AG04449 (cell line): ENCODE measurements at regions of chr9 and their contacts with region 1.

Region 1: DNA sequence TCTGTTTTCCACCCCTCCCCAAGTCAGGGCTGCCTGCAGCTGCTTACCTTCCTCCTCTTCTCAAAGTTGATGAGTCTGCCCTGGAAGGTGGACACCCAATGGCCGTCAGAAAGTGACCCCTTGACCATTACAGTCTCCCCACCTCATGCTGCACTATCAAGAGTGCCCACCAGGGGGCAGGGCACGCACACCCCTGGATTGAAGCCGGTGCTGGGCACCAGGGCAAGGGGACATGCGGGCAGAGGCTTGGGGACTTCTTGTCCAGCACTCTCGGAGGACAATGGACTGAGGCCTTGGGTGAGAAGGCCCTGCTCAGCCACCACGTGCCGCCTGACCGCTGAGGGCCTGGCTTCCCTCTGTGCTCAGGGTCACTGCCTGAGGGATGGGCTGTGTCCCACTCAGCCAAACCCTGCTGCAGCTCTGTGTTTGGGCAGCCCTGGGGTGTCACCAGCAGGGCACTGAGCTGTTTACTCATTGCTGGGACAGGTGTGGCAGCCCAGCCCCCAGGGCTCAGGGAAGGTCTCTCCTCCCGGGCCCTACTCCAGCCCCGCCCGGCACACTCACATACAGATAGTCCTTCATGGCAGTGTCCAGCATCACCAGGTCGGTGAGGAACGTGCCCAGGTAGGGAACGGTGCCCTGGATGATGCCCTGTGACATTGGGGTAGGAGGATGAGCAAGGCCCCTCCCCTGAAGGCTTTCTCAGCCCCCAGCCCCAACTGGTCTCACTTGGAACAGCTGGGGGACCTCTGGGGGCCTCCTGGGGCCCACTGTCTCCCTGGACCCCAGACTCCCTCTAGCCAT is 17.7 kb downstream of the RALGDS start:
- DNase-seq: no peak
- H3K4me3 ChIP-seq: no peak overlapping the region
- CTCF ChIP-seq: peak; percentile 90

Region 2: DNA sequence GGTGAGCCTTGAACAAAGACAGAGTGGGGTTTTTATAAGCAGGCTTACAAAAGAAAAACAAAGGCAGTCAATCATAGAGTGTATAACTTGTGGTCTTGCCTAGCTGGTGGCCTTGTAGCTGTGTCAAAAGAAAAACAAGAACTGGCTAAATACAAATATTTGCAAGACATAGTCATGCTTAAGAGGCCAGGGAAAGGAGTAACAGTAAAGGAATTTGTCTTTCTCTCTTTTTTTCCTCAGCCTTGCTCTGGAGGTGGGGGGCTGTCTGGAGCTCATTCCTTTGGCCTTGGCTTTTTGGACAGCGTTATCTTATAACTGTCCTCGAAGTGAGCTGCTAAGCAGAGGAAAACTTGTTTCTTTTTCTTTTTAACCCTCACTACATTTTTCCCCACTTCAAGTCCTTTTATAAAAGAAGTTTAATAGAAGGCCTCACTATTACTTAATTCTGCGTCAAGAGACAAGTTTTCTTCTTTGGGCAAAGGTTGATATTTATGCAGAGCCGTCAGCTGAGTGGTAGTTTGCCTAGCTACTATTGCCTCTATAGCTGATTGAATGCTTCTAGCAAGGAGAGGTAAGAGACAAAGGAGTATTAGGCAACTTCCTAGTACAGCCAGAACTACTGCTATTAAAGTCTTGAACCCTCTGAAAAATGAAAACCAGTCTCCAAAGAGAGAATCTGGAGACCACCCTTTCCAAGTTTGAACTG is 27.3 kb before region 1 on chr9:
- CTCF ChIA-PET with region 1: interaction called, 17 read pairs
- POLR2A ChIA-PET with region 1: no interaction called
- DNase-seq: peak; percentile 80
- H3K4me3 ChIP-seq: no peak overlapping the region; the same call in 1 of the 2 replicates
- CTCF ChIP-seq: no peak

Region 3: GRCh38 chr9:133089271-133089671 is 14.1 kb before region 1 on chr9:
- CTCF ChIA-PET with region 1: interaction called, 16 read pairs
- POLR2A ChIA-PET with region 1: no interaction called
- DNase-seq: no peak
- H3K4me3 ChIP-seq: no peak overlapping the region
- CTCF ChIP-seq: no peak

Region 4: GRCh38 chr9:133115448-133116345 is 12.3 kb after region 1 on chr9:
- CTCF ChIA-PET with region 1: interaction called, 139 read pairs
- POLR2A ChIA-PET with region 1: no interaction called
- DNase-seq: no peak
- H3K4me3 ChIP-seq: no peak overlapping the region
- CTCF ChIP-seq: no peak

Region 5: DNA sequence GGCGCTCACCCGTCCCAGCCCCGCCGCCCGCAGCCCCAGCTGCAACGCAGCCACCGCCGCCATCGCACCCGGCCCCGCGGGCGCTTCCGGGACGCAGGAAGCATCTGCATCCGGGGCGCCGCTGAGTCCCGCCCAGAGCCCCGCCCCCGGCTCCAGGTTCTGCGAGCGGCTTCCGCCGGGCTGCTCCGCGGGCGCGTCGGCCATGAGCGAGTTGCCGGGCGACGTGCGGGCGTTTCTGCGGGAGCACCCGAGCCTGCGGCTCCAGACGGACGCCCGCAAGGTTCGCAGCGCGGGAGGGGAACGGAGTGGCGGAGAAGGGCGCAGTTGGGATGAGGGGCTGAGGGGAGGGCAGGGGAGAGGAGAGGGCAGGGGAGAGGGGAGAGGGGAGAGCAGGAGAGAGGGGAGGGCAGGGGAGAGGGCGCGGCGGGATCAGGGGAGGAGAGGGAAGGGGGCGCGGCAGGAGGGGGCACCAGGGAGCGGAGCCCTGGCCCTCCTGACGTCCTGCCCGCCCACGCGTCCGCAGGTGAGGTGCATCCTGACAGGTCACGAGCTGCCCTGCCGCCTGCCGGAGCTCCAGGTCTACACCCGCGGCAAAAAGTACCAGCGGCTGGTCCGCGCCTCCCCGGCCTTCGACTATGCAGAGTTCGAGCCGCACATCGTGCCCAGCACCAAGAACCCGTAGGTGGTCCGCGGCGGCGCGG is 253.2 kb after region 1 on chr9 and contains the starts of genes SURF1 and SURF2:
- CTCF ChIA-PET with region 1: no interaction called
- POLR2A ChIA-PET with region 1: no interaction called
- DNase-seq: no peak
- H3K4me3 ChIP-seq: peak within 1 kb of the TSS; percentile 84
- CTCF ChIP-seq: no peak